Heart left ventricle (tissue), 16 donors: ENCODE measurements at regions of chr14 and their contacts with region 1.

Region 1: DNA sequence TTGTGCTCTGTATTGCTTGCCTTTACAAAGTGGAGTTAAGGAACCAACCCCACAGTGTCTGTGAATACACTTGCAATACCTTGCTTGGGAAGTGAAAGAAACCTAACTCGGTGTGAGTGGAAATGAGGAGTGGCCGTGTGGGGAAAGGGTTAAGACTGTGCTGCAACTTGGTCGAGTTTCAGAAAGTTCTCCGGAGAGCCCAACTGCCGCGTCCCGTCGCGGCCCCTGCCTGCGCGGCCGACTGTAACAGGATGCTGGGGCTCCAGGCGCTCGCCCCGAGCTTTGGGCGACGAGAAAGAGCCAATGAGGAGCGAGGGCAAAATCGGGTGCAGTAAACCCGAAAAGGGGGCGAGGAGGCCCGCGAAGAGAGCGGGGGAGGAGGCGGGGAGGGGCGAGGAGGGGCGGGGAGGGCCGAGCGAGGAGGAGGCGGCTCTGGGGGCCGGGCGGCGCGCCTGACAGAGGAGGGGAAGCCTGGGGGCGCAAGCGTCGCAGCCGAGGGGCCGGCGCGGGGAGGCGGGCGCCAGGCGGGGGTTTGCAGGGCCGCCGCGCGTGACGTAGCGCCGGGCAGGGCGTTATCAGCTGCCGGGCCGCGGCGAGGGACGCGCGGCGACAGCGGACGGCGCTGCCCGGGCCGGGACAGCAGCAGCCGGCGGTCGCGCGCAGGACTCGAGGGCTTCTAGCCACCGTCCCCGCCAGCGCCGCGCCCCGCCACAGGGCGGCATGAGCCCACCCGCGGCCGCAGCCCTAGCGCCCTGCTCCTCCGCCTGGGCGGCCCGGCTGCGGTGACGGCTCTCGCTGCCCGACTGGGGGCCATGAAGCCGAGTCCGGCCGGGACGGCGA is at the start of gene DACT1:
- DNase-seq: peak; percentile 72 to 84 (median 80)
- ATAC-seq: peak; percentile 12 to 84 (median 75)
- H3K4me3 ChIP-seq: peak within 1 kb of the TSS; percentile 46 to 90 (median 77)
- H3K27ac ChIP-seq: peak within 1 kb of the TSS; percentile 10 to 92 (median 82)
- H3K4me1 ChIP-seq: peaks cover 0 to 36% (median 25%) of the 10 kb centered on the region in 12 donors
- H3K27me3 ChIP-seq: peaks cover 0 to 24% (median 0%) of the 10 kb centered on the region in 9 donors
- CTCF ChIP-seq: peak in 3 of 12 donors; percentile 4 to 6 (median 4)
- POLR2A ChIP-seq: no peak
- total RNA-seq, gene DACT1: 1.3 to 7.2 (median 3.1) TPM

Region 2: DNA sequence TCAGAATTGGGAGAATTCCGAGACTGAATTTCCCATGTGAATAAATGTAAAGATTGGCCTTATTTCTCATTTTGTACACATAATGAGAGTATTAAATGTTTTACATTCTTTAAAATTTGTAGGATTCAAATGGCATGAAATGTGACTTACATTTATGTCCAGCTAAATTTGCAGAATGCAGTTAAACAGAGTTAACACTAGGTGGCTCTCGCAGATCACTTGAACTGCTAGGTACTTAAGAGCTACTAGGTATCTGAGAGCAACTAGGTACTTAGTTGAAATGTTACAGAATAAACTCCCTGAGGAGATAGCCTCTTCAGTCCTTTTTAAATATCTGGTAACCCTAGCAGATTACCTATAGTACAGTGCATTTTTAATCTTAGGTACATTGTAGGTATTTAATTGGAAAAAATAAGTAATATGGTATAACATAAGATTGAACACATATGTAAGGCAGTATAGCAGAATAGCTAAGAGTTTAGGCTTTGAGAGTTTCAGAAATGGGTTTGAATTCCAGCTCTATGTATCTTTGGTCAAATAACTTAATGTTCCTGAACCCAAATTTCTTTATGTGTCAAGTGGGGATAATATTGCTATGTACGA is 136.3 kb before region 1 on chr14:
- intact Hi-C with region 1: loop called in 9 of 10 experiments (anchors 5 to 10 kb)
- DNase-seq: no peak
- ATAC-seq: peak in 3 of 4 donors; percentile 50 to 69 (median 58)
- H3K4me3 ChIP-seq: no peak overlapping the region
- H3K27ac ChIP-seq: no peak overlapping the region
- H3K4me1 ChIP-seq: no peaks in the 10 kb centered on the region
- H3K27me3 ChIP-seq: no peaks in the 10 kb centered on the region
- CTCF ChIP-seq: peak; percentile 64 to 87 (median 78)
- POLR2A ChIP-seq: no peak

Region 3: DNA sequence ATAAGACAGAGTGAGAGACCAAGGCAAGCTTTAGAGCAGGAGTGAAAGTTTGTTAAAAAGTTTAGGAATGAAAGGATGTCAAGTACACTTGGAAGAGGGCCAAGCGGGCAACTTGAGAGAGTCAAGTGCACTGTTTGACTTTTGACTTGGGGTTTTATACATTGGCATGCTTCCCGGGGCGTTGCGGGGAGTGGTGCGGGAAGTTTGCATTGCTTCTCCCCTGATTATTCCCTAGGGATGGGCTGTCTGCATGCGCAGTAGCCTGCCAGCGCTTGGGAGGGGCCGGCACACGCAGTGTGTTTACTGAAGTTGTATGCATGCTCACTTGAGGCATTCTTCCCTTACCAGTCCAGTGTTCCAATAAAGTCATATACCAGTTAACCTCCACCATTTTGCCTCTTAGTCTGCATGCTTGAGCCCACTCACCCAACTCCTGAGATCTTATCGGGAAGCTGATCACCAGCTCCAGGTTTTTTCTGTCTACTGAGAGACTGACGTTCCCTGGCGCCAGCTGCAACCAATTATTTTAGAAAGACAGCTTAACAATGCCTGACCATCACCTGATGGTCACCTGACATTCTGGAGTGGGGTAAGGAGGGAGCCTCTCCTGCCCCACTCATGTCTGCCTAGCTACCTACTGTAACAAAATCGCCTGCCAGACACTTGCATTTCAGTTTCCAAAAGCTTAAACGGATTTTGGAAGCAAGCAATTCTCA is 53.3 kb after region 1 on chr14:
- intact Hi-C with region 1: no loop called
- DNase-seq: no peak
- ATAC-seq: no peak
- H3K4me3 ChIP-seq: no peak overlapping the region
- H3K27ac ChIP-seq: no peak overlapping the region
- H3K4me1 ChIP-seq: no peaks in the 10 kb centered on the region
- H3K27me3 ChIP-seq: no peaks in the 10 kb centered on the region
- CTCF ChIP-seq: no peak
- POLR2A ChIP-seq: no peak

Region 4: DNA sequence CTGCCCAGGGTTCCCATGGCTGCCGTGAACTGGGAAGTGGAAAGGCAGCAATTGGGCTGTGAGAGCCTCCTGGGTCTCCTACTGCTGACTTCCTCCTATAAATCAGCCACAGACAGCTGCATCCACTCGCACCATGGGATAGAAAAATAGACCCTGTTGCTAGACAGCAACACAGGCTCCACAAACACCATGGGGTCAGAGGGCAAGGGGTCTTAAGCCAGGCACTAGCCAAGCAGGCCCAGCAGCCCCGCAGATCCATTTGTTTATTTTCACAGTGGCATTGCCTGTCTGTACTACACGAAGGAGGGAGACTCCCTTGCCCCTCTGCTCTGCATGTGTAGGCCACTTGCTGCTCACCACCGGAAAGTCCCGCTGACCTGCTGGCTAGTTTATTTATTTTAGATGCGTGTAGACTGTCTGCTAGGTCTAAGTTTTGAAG is 139.9 kb after region 1 on chr14:
- intact Hi-C with region 1: no loop called
- DNase-seq: no peak
- ATAC-seq: no peak
- H3K4me3 ChIP-seq: no peak overlapping the region
- H3K27ac ChIP-seq: no peak overlapping the region
- H3K4me1 ChIP-seq: no peaks in the 10 kb centered on the region
- H3K27me3 ChIP-seq: no peaks in the 10 kb centered on the region
- CTCF ChIP-seq: no peak
- POLR2A ChIP-seq: no peak

Region 5: GRCh38 chr14:58808828-58809227 is 171.2 kb after region 1 on chr14:
- intact Hi-C with region 1: loop called in 1 of 10 experiments (anchors 10 kb)
- DNase-seq: no peak
- ATAC-seq: no peak
- H3K4me3 ChIP-seq: no peak overlapping the region
- H3K27ac ChIP-seq: peak overlapping the region in 1 of 12 donors; percentile 25
- H3K4me1 ChIP-seq: peaks cover 0 to 6% (median 0%) of the 10 kb centered on the region in 12 donors
- H3K27me3 ChIP-seq: no peaks in the 10 kb centered on the region
- CTCF ChIP-seq: no peak
- POLR2A ChIP-seq: no peak

Region 6: DNA sequence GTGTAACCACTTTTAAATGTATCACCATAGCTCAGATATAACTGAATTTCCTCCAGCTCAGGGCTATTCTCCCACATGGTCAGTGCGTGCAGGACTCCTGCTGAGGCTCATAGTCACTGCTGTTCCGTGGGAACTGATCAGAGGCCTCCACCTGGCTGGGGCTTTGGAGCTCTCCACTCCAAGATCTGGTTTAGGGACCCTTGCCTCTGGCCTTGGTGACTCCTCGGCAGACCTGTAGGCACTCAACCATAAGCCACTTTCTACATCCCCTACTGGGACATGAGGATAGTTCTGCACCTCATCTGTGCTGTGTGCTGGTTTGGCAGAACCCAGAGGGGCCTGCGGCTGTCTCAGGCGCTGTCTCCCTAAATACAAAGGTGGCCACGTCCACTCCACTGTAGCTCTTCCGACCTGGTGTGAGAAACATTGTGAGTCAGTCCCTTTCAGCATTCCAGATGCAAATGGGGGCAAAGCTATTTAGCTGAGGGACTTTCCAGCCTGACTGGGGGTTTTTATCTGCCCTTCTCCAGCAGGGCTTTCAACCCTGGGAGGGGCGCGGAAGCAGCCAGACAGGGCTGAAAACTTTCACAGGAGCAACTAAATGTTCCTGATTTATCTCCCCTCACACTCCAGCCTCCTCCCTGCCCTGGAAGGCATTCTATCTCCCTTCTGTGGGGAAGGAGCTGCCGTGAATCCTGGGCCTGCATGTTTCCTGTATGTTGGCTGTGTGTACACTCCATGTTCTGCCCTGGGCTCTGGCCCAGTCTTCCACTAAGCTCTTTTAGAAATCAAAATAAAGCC is 332.5 kb after region 1 on chr14:
- intact Hi-C with region 1: loop called in 1 of 10 experiments (anchors 10 kb)
- DNase-seq: no peak
- ATAC-seq: no peak
- H3K4me3 ChIP-seq: no peak overlapping the region
- H3K27ac ChIP-seq: peak overlapping the region in 1 of 12 donors; percentile 8
- H3K4me1 ChIP-seq: peaks cover 0 to 14% (median 0%) of the 10 kb centered on the region in 12 donors
- H3K27me3 ChIP-seq: no peaks in the 10 kb centered on the region
- CTCF ChIP-seq: no peak
- POLR2A ChIP-seq: no peak

Region 7: GRCh38 chr14:59028476-59029202 is 391.0 kb after region 1 on chr14:
- intact Hi-C with region 1: loop called in 8 of 10 experiments (anchors 5 to 10 kb)
- DNase-seq: peak in 4 of 5 donors; percentile 35 to 62 (median 51)
- ATAC-seq: peak in 3 of 4 donors; percentile 74 to 92 (median 86)
- H3K4me3 ChIP-seq: no peak overlapping the region
- H3K27ac ChIP-seq: no peak overlapping the region
- H3K4me1 ChIP-seq: peaks cover 0 to 10% (median 0%) of the 10 kb centered on the region in 12 donors
- H3K27me3 ChIP-seq: no peaks in the 10 kb centered on the region
- CTCF ChIP-seq: peak; percentile 60 to 81 (median 72)
- POLR2A ChIP-seq: no peak